Transverse colon (tissue), 4 donors: ENCODE measurements at regions of chr1 and their contacts with region 1.

Region 1: GRCh38 chr1:15741183-15741850 is 982 bp upstream of the TMEM82 start:
- DNase-seq: peak; percentile 94
- H3K4me3 ChIP-seq: peak overlapping the region in 1 of 4 donors; percentile 13
- H3K27ac ChIP-seq: peak overlapping the region; percentile 80 to 87 (median 86)
- H3K4me1 ChIP-seq: peaks cover 5 to 45% (median 39%) of the 10 kb centered on the region in 4 donors
- H3K27me3 ChIP-seq: no peaks in the 10 kb centered on the region
- CTCF ChIP-seq: peak; percentile 82 to 98 (median 87)
- EP300 ChIP-seq: peak; percentile 78
- POLR2A ChIP-seq: peak; percentile 78

Region 2: DNA sequence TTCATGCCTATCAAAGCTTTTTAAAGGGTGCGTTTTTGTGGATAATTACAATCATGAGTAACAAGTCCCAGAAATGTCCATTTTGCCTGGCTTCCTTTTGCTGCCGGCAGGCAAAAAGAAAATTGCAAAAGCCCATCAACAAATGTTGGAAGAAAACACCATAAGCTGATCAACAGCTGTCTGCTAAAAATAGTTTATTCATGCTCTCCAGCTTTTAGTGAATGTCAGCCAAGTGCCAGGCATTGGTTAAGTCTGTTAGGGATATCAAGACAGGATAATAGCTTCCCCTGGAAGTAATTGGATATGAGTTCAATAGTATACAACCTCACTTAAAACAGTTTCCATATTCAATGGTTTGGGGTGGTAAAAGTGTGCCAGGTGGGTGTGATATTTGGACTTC is 142.9 kb before region 1 on chr1:
- in situ Hi-C with region 1: no loop called
- intact Hi-C with region 1: loop called (anchors 10 kb)
- DNase-seq: no peak
- H3K4me3 ChIP-seq: no peak overlapping the region
- H3K27ac ChIP-seq: no peak overlapping the region
- H3K4me1 ChIP-seq: peaks cover 9 to 20% (median 18%) of the 10 kb centered on the region in 4 donors
- H3K27me3 ChIP-seq: no peaks in the 10 kb centered on the region
- CTCF ChIP-seq: no peak
- EP300 ChIP-seq: no peak
- POLR2A ChIP-seq: no peak

Region 3: GRCh38 chr1:15684468-15685291 is 56.6 kb before region 1 on chr1:
- in situ Hi-C with region 1: no loop called
- intact Hi-C with region 1: loop called (anchors 2 kb)
- DNase-seq: peak; percentile 47
- H3K4me3 ChIP-seq: peak overlapping the region; percentile 65 to 100 (median 92)
- H3K27ac ChIP-seq: peak overlapping the region; percentile 78 to 99 (median 92)
- H3K4me1 ChIP-seq: peaks cover 7 to 47% (median 21%) of the 10 kb centered on the region in 4 donors
- H3K27me3 ChIP-seq: no peaks in the 10 kb centered on the region
- CTCF ChIP-seq: peak; percentile 8 to 47 (median 13)
- EP300 ChIP-seq: no peak
- POLR2A ChIP-seq: no peak

Region 4: GRCh38 chr1:16498573-16499413 is 757.5 kb after region 1 on chr1:
- in situ Hi-C with region 1: no loop called
- intact Hi-C with region 1: no loop called
- DNase-seq: peak; percentile 93
- H3K4me3 ChIP-seq: peak overlapping the region; percentile 56 to 87 (median 77)
- H3K27ac ChIP-seq: peak overlapping the region; percentile 73 to 85 (median 82)
- H3K4me1 ChIP-seq: peaks cover 0 to 21% (median 14%) of the 10 kb centered on the region in 4 donors
- H3K27me3 ChIP-seq: no peaks in the 10 kb centered on the region
- CTCF ChIP-seq: no peak
- EP300 ChIP-seq: no peak
- POLR2A ChIP-seq: no peak